Mammary epithelial cell (primary cell): ENCODE measurements at regions of chr6 and their contacts with region 1.

Region 1: DNA sequence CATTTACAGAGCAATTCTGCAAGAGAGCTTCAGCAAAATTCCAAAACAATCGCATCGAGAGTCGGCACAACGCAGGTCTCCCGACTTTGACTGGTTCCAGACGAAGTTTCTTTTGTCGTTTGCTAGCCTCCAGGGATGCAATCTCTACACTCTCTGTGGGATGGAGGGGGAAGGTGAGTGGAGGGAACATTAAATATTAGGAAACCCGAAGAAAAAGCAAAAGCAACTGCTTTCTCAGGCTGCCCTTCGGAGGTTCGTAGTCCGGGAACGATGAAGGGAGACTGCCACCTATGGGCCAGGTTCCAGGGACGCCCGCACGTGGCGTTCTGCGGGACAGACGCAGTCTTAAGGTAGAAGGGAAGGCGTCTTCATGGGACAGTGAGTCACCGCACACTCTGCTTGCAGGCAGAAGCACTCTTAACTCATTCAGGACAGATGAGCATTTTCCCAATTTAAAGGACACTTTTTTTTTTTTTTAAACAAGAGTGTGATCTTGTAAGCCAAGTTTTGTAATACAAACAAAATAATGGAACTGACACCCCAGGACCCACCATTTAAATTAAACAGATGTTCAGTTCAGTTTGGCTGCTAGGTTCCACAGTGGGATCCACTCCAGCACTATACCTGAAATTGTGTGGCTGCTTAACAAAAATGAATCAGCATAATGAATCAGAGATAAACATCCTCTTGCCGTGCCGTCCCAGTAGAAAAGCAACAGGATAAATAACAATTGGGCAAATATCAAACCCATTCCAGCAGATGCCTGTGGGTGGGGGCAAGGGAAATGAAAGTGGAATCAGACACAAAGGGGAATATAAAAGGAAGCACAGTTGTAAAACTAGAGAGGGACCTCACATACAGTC is 65.8 kb upstream of the ARMC2 start:
- DNase-seq: peak; percentile 84
- H3K4me3 ChIP-seq: peak overlapping the region; percentile 45 to 52 (median 47)
- H3K27ac ChIP-seq: peak overlapping the region; percentile 26
- H3K4me1 ChIP-seq: peaks cover 23% of the 10 kb centered on the region
- H3K27me3 ChIP-seq: no peaks in the 10 kb centered on the region
- CTCF ChIP-seq: peak; percentile 76 to 88

Region 2: DNA sequence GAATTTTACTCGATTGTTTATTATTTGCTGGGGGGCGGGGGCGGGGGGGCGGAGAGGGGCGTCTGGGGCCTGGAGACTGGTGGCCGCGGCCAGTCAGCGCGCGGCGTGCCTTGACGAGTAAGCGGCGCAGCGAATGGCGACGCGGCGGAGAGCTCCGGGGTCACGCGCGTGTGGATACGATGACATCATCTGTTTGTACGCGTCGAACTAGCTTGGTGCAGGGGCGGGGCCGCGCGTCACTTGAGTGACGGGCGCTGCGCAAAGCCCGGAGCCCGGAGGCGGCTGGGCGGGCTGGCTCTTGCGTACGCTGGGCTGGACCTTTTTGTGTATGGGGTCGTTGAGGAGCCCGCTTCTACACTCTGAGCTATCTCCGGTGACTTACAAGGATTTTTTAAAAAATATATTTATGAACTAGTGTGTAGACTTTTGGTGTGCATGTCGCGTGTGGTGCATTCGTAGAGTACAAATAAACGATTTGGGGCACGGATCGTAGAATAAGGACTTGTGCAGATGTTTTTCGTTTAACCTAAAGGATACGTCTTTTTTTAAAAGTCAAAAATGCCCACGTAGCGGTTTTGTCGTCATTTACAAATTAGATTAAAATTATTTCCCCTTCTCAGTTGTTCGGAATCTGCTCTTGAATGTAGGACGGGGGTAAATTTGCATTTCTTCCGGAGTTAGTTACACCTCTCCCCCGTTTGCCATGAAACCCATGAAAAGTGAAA is 223.9 kb before region 1 on chr6:
- CTCF ChIA-PET with region 1: no interaction called
- dilution Hi-C with region 1: no loop called
- in situ Hi-C with region 1: loop called in 1 of 2 experiments (anchors 5 kb)
- intact Hi-C with region 1: loop called (anchors 1 kb)
- DNase-seq: peak; percentile 98
- H3K4me3 ChIP-seq: peak overlapping the region; percentile 82 to 93 (median 85)
- H3K27ac ChIP-seq: peak overlapping the region; percentile 83
- H3K4me1 ChIP-seq: peaks cover 30% of the 10 kb centered on the region
- H3K27me3 ChIP-seq: no peaks in the 10 kb centered on the region
- CTCF ChIP-seq: no peak

Region 3: GRCh38 chr6:108655806-108656651 is 126.4 kb before region 1 on chr6:
- CTCF ChIA-PET with region 1: no interaction called
- dilution Hi-C with region 1: no loop called
- in situ Hi-C with region 1: no loop called
- intact Hi-C with region 1: loop called (anchors 5 kb)
- DNase-seq: no peak
- H3K4me3 ChIP-seq: no peak overlapping the region
- H3K27ac ChIP-seq: no peak overlapping the region
- H3K4me1 ChIP-seq: peaks cover 48% of the 10 kb centered on the region
- H3K27me3 ChIP-seq: no peaks in the 10 kb centered on the region
- CTCF ChIP-seq: no peak

Region 4: GRCh38 chr6:108699290-108700041 is 82.9 kb before region 1 on chr6:
- CTCF ChIA-PET with region 1: no interaction called
- dilution Hi-C with region 1: no loop called
- in situ Hi-C with region 1: loop called in 1 of 2 experiments (anchors 10 kb)
- intact Hi-C with region 1: no loop called
- DNase-seq: no peak
- H3K4me3 ChIP-seq: no peak overlapping the region
- H3K27ac ChIP-seq: no peak overlapping the region
- H3K4me1 ChIP-seq: peaks cover 10% of the 10 kb centered on the region
- H3K27me3 ChIP-seq: no peaks in the 10 kb centered on the region
- CTCF ChIP-seq: no peak

Region 5: DNA sequence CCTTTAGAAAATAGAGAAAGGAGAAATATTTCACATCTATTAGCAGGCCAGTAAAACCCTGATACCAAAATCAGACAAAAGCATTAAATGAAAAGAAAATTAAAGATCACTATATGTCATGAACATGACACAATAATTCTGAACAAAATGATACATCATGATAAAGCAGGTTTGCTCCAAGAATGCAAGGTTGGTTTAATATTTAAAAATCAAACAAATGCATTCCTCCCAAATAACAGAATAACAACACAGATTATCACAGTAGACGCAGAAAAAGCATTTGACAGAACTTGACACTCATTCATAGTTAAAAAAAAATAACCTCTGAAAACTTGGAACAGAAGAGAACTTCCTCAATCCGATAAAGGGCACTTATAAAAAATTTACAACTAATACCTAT is 42.9 kb after region 1 on chr6:
- CTCF ChIA-PET with region 1: no interaction called
- dilution Hi-C with region 1: loop called (anchors 5 kb)
- in situ Hi-C with region 1: no loop called
- intact Hi-C with region 1: no loop called
- DNase-seq: no peak
- H3K4me3 ChIP-seq: no peak overlapping the region
- H3K27ac ChIP-seq: no peak overlapping the region
- H3K4me1 ChIP-seq: no peaks in the 10 kb centered on the region
- H3K27me3 ChIP-seq: no peaks in the 10 kb centered on the region
- CTCF ChIP-seq: no peak

Region 6: DNA sequence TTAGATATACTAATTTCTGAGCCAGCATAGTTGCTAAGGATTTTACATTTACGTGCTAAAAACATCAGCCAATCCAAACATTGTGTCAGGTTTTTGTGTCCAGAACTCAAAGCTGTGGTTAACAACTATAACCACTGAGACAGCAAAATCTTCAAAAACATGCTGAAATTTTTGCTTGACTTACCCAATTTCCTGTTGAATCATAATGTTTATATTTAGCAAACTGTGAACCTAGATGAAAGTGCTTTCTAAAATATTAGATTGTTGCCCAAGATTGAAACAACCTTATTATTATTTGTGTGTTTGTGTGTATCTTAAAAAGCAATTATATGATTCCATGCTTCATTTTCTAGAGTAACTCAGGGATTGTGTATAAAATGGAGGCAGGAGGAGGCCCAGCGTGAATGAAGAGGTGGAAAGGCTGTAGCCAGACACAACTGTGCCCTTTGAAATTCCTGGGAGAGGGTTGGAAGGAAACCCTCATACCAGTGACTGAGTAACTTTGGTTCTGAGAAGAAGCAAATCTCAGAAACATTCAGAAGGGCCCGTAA is 113.8 kb after region 1 on chr6:
- CTCF ChIA-PET with region 1: no interaction called
- dilution Hi-C with region 1: no loop called
- in situ Hi-C with region 1: no loop called
- intact Hi-C with region 1: loop called (anchors 2 kb)
- DNase-seq: peak; percentile 77
- H3K4me3 ChIP-seq: no peak overlapping the region
- H3K27ac ChIP-seq: peak overlapping the region; percentile 69
- H3K4me1 ChIP-seq: peaks cover 22% of the 10 kb centered on the region
- H3K27me3 ChIP-seq: no peaks in the 10 kb centered on the region
- CTCF ChIP-seq: no peak